Activated B cell treated with CpG ODN at 0.5 μM for 24 hours (primary cell): ENCODE measurements at regions of chr2 and their contacts with region 1.

Region 1: GRCh38 chr2:71510196-71510807 is 56.9 kb downstream of the DYSF start:
- DNase-seq: peak; percentile 57
- ATAC-seq: peak; percentile 74
- H3K4me3 Mint-ChIP-seq: no peak overlapping the region
- H3K27ac Mint-ChIP-seq: no peak overlapping the region
- H3K4me1 Mint-ChIP-seq: peaks cover 2% of the 10 kb centered on the region
- H3K27me3 Mint-ChIP-seq: peaks cover 5% of the 10 kb centered on the region
- CTCF ChIP-seq: no peak

Region 2: DNA sequence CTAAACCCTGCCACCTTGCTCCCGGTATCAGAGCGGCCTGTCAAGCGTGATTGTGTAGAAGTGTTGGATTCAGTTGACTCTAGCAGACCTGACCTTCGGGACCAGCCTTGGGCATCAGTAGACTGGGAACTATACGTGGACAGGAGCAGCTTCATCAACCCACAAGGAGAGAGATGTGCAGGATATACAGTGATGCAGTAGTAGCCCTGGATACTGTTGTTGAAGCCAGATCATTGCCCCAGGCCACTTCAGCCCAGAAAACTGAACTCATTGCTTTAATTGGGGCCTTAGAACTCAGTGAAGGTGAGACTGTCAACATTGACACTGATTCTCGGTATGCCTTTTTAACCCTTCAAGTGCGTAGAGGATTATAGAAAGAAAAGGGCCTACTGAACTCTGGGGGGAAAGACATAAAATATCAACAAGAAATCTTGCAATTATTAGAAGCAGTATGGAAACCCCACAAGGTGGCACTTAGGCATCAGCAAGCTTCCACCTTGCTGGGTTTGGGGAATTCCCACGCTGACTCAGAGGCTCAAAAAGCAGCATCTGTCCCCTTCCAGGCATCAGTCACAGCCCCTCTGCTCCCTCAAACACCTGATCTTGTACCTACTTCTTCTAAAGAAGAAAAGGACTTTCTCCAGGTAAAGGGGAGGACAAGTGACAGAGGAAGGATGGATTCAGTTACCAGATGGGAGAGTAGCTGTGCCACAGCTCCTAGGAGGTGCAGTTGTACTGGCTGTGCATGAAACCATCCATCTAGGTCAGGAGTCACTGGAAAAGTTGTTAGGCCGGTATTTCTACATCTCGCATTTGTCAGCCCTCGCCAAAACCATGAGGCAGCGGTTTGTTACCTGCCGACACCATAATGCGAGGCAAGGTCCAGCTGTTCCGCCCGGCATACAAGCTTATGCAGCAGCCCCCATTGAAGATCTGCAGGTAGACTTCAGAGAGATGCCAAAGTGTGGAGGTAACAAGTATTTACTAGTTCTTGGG is 460.6 kb before region 1 on chr2:
- CTCF ChIA-PET with region 1: no interaction called
- POLR2A ChIA-PET with region 1: no interaction called
- intact Hi-C with region 1: loop called (anchors 1 kb)
- DNase-seq: no peak
- ATAC-seq: peak; percentile 82
- H3K4me3 Mint-ChIP-seq: no peak overlapping the region
- H3K27ac Mint-ChIP-seq: no peak overlapping the region
- H3K4me1 Mint-ChIP-seq: peaks cover 7% of the 10 kb centered on the region
- H3K27me3 Mint-ChIP-seq: no peaks in the 10 kb centered on the region
- CTCF ChIP-seq: no peak

Region 3: GRCh38 chr2:71226965-71227560 is 283.2 kb before region 1 on chr2 and contains the start of gene PAIP2B:
- CTCF ChIA-PET with region 1: interaction called, 3 read pairs
- POLR2A ChIA-PET with region 1: no interaction called
- intact Hi-C with region 1: loop called (anchors 1 kb)
- DNase-seq: peak; percentile 89
- ATAC-seq: peak; percentile 92
- H3K4me3 Mint-ChIP-seq: peak within 1 kb of the TSS; percentile 99
- H3K27ac Mint-ChIP-seq: peak within 1 kb of the TSS; percentile 95
- H3K4me1 Mint-ChIP-seq: peaks cover 28% of the 10 kb centered on the region
- H3K27me3 Mint-ChIP-seq: peaks cover 9% of the 10 kb centered on the region
- CTCF ChIP-seq: no peak
- total RNA-seq, gene PAIP2B: 3.7 and 4.0 TPM in 2 replicates